ENCODE measurements at regions of chr6 and their contacts with region 1.

Region 1: GRCh38 chr6:42547407-42548329 is 16.2 kb upstream of the UBR2 start:
- DNase-seq: peak; percentile 93
- CTCF ChIP-seq: peak; percentile 98

Region 2: DNA sequence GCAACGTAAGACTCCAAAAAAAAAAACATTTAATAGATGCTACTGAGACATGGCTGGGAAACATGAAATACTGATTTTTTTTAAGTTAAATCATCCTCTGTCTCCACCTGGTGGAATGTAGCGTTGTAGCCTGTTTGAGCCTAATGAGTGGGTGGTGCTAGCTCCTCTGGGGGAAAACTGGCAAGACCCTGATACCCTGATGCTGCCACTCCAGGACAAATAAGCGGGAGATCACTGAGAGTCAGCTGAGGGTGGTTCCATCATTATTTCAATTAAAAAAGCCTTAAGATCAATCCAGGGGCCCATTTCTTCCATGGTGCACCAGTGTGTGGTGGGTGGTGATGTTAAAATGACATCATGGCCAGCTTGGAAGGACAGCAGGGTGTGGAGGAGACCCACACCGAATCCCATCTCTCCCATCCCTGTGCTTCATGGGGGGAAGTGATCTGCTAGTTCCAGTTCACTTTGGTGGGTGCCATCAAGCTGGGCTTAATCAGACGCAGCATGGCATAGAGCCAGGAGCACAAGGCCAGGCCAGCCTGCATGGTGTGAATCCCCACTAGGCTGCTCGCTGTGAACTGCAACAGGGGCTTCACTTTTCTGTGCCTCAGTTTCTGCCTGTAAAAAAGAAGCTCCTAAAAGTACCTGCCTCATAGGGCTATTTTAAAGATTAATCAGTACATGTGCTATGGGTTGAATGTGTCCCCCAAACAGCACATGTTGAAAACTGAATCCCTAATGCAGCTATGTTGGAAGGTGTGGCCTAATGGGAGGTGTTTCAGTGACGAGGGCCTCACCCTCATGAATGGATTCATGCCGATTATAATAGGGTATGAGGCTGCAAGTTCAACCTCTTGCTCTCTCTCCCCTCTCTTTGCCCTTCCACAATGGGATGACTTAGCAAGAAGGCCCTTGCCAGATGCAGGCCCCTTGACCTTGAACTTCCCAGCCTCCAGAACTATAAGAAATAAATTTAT is 317.0 kb before region 1 on chr6:
- CTCF ChIA-PET with region 1: interaction called, 11 read pairs
- POLR2A ChIA-PET with region 1: no interaction called
- DNase-seq: peak; percentile 43
- CTCF ChIP-seq: peak; percentile 37

Region 3: DNA sequence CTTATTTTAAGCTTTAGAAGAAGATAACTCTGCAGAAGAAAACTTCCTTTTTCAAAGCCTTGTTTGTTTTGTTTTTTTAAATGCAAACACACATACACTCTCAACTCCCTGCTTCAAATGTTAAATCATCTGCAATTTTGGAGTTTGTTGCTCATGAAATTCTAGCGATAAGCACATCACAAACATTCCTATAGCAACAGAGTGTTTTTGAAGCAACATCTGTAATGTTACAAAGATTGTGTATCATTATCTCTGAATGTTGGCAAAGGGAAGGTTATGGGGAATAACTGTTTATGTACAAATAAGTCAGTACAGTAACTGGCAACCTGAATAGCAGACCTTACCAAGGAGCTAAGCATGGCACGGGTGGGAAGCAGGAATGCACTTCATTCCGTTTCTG is 245.3 kb before region 1 on chr6:
- CTCF ChIA-PET with region 1: interaction called, 13 read pairs
- POLR2A ChIA-PET with region 1: no interaction called
- DNase-seq: no peak
- CTCF ChIP-seq: no peak

Region 4: GRCh38 chr6:42367353-42368011 is 180.2 kb before region 1 on chr6:
- CTCF ChIA-PET with region 1: interaction called, 16 read pairs
- POLR2A ChIA-PET with region 1: no interaction called
- DNase-seq: peak; percentile 77
- CTCF ChIP-seq: no peak

Region 5: GRCh38 chr6:42520786-42521607 is 26.7 kb before region 1 on chr6:
- CTCF ChIA-PET with region 1: interaction called, 23 read pairs
- POLR2A ChIA-PET with region 1: no interaction called
- DNase-seq: no peak
- CTCF ChIP-seq: no peak

Region 6: GRCh38 chr6:42563697-42564505 is 16.2 kb after region 1 on chr6 and contains the start of gene UBR2:
- CTCF ChIA-PET with region 1: interaction called, 100 read pairs
- POLR2A ChIA-PET with region 1: no interaction called
- DNase-seq: peak; percentile 92
- CTCF ChIP-seq: peak; percentile 27

Region 7: DNA sequence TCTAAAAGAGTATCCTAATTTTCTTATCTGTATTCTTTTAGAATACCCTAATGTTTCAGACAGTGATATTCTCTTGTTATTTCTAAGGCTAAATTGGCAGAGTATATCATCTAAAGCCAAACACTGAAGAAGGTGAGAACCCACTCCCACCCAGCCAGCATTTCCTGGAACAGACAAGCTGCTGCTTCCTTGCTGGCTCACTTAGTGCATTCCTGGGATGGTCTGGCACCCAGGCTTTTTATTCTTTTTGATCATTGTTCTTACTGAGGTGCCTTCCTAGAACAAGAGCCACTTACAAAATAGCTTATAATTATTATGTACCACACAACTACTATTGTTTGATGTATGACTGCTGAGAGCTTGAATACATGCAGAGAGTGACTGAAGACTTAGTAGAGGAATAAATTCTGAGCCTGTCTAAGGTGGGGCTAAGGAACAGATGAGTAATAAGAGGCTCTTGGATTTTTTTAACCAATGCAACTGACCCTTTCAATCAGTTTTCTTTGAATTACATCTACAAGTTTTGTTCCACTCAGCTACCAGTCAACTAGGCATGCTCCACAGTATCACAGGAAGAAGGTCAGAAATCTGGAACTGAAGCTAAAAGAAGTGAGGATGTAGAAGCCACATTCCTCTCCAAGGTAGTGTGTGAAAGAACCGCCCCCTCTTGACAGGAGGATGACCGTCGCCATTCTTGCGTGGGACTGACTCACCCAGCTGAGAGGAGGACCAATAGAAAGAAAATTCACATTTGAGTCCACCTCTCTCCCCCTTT is 144.7 kb after region 1 on chr6:
- CTCF ChIA-PET with region 1: no interaction called
- POLR2A ChIA-PET with region 1: no interaction called
- DNase-seq: no peak
- CTCF ChIP-seq: no peak